Esophagus muscularis mucosa (tissue), 4 donors: ENCODE measurements at regions of chr2 and their contacts with region 1.

Region 1: DNA sequence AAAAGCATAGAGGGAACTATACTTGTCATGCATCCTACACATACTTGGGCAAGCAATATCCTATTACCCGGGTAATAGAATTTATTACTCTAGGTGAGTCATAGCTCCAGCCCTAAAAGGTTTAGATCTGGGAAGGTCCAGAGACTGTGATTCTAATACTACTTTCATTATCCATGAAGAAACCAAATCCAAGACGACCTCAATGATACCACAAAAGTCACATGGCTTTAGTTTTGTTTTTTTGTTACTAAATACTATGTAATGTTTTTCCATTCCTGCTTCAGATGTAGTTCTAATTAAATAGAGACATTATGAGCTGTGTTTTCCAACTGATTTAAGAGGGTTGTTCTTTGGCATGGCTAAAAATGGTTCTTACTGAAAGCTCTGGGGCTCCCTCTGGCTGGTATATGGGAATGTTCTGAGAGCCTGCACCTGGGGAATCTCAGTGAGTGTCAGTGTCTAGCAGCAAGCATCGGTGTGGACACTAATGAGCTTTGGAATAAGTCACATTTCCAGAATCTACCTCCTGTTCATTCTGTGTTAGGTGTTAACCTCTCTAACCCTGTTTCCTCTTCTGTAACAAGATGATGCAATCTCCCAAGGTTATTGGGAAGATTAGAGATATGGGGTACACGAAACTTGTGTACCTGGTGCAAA is 20.5 kb upstream of the IL1RL2 start:
- DNase-seq: no peak
- H3K4me3 ChIP-seq: no peak overlapping the region
- H3K27ac ChIP-seq: no peak overlapping the region
- H3K4me1 ChIP-seq: peaks cover 0 to 10% (median 3%) of the 10 kb centered on the region in 4 donors
- H3K27me3 ChIP-seq: no peaks in the 10 kb centered on the region
- CTCF ChIP-seq: peak; percentile 42 to 67 (median 65)
- EP300 ChIP-seq: no peak
- POLR2A ChIP-seq: no peak

Region 2: DNA sequence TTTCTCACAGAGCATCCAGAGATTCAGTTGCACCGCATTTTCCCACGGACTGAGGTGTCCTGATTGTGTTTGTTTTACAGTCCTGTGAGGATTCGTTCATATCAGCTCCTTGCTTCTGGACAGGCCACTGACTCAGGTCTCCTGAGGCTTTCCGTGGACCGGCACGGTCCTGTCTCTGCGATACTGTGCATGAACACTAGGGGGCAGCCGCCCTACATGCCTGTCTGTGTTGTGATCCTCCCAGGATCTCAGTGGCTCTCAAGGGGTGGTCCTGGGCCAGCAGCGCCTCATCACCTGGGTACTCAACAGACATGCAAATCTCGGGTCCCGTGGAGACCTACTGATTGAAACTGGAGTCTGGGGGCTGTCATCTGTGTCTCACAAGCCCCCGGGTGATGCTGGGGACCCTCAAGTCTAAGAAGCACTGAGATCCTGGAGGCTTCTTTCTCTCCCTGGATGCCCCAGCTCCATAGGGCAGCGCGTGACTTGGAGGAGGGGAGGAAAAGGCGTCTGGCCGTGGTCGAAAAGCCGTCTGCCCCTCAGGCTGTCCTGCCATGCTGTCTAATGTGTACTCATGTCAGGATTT is 145.6 kb before region 1 on chr2:
- intact Hi-C with region 1: loop called (anchors 2 kb)
- DNase-seq: peak; percentile 98
- H3K4me3 ChIP-seq: no peak overlapping the region
- H3K27ac ChIP-seq: peak overlapping the region in 1 of 4 donors; percentile 52
- H3K4me1 ChIP-seq: peaks cover 10 to 19% (median 14%) of the 10 kb centered on the region in 4 donors
- H3K27me3 ChIP-seq: no peaks in the 10 kb centered on the region
- CTCF ChIP-seq: peak in 2 of 3 experiments; percentile 94 to 99
- EP300 ChIP-seq: no peak
- POLR2A ChIP-seq: no peak

Region 3: DNA sequence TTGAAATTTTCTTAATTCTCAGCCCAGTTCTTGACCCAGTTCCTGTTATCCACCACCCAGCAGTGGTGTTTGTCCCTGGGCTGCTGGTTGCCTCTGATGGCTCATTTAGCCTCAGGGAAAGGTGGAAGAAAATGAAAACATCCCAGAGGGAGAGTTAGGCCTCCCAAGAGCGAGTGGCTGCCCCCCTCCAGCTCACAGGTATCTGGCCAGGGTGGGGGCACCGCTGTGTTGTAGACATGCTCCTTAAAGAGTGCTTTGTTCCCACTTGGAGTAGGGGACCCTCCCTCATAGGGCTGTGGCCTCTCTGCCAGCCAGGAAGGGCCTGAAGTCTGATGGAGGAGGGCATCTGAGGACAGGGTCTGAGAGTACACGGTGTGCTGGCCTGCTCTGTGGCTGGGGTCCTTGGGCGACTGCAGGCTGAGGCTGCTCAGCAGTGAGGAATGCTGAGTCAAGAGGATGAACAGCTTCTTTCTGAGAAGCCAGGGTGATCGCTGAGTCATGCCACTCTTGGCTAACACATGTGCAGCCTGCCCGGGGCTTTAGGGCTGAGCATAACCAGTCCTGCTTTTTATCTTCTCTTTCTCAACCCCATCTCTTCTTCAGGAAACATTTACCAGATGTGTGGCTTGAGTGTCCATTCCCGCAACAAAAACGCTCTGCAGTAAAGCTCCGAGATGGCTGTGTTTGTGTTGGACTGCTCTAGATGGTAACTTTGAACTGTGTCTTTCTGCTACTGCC is 102.2 kb before region 1 on chr2:
- intact Hi-C with region 1: no loop called
- DNase-seq: peak; percentile 97
- H3K4me3 ChIP-seq: peak overlapping the region in 3 of 4 donors; percentile 1 to 23 (median 15)
- H3K27ac ChIP-seq: peak overlapping the region; percentile 82 to 92 (median 90)
- H3K4me1 ChIP-seq: peaks cover 51 to 67% (median 67%) of the 10 kb centered on the region in 4 donors
- H3K27me3 ChIP-seq: no peaks in the 10 kb centered on the region
- CTCF ChIP-seq: no peak
- EP300 ChIP-seq: peak; percentile 95
- POLR2A ChIP-seq: no peak